Posterior cingulate gyrus (tissue), 11 donors: ENCODE measurements at regions of chr7 and their contacts with region 1.

Region 1: GRCh38 chr7:109641445-109641844 is 1071.8 kb downstream of the DNAJB9 start:
- DNase-seq: no peak

Region 2: DNA sequence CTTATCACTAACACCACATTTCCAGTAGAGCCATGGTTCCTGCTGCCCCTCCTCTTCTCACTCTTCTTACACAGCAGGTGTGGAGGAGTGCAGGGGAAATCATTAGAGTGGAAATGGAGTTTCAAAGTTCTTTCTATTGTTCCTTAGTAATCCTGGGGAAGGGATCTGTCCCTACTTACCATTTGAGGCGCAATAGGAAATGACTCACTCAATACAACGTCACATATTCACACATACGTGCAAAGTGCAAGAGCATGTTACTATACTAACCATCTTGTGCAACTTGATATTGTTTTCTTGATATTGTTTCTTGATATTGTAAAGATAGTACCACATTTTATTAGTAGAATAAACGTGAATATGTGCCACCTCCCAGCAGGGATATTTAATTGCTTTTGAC is 61.5 kb before region 1 on chr7:
- intact Hi-C with region 1: loop called (anchors 10 kb)
- DNase-seq: no peak

Region 3: GRCh38 chr7:110003827-110004226 is 362.4 kb after region 1 on chr7:
- intact Hi-C with region 1: no loop called
- DNase-seq: no peak